ENCODE measurements at regions of chr16 and their contacts with region 1.

Region 1: GRCh38 chr16:23564575-23565363 is 7.2 kb downstream of the UBFD1 start:
- DNase-seq: peak; percentile 59 to 65
- ATAC-seq: peak; percentile 30 to 91 (median 87)
- H3K4me3 ChIP-seq: no peak overlapping the region
- H3K27ac ChIP-seq: peak overlapping the region in 9 of 10 donors; percentile 17 to 81 (median 55)
- H3K4me1 ChIP-seq: peaks cover 6 to 38% (median 18%) of the 10 kb centered on the region in 9 donors
- H3K27me3 ChIP-seq: no peaks in the 10 kb centered on the region
- CTCF ChIP-seq: no peak

Region 2: DNA sequence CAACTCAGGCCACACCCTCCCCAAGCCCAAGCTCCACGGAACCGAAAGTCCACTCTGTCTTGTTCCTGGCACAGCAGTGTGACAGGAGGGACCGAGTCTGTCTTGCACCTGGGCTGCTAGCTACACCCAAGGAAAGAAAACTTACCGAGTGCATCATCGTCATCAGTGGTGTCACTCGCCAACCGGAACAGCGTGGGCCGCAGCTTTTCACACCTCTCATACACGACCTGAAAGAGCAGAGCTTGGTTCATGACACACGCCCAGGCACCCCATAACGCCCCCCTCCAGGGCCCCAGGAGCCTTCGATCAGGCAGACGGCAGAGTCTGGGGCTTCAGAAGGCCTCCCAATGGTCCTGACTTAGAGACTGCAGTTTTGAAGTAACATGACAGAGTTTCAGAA is 82.0 kb before region 1 on chr16:
- intact Hi-C with region 1: no loop called
- DNase-seq: no peak
- ATAC-seq: peak in 2 of 8 donors; percentile 31 to 41
- H3K4me3 ChIP-seq: no peak overlapping the region
- H3K27ac ChIP-seq: peak overlapping the region in 1 of 10 donors; percentile 62
- H3K4me1 ChIP-seq: peaks cover 0 to 10% (median 0%) of the 10 kb centered on the region in 9 donors
- H3K27me3 ChIP-seq: no peaks in the 10 kb centered on the region
- CTCF ChIP-seq: no peak

Region 3: GRCh38 chr16:23595951-23596720 is 31.4 kb after region 1 on chr16 and contains the start of gene NDUFAB1:
- intact Hi-C with region 1: loop called in 2 of 10 experiments (anchors 2 to 5 kb)
- DNase-seq: peak; percentile 89 to 93
- ATAC-seq: peak; percentile 95 to 99 (median 98)
- H3K4me3 ChIP-seq: peak within 1 kb of the TSS; percentile 55 to 100 (median 96)
- H3K27ac ChIP-seq: peak within 1 kb of the TSS; percentile 78 to 96 (median 94)
- H3K4me1 ChIP-seq: peaks cover 7 to 46% (median 27%) of the 10 kb centered on the region in 9 donors
- H3K27me3 ChIP-seq: no peaks in the 10 kb centered on the region
- CTCF ChIP-seq: peak; percentile 99 to 100 (median 100)
- total RNA-seq, gene NDUFAB1: 338 to 592 (median 433) TPM

Region 4: DNA sequence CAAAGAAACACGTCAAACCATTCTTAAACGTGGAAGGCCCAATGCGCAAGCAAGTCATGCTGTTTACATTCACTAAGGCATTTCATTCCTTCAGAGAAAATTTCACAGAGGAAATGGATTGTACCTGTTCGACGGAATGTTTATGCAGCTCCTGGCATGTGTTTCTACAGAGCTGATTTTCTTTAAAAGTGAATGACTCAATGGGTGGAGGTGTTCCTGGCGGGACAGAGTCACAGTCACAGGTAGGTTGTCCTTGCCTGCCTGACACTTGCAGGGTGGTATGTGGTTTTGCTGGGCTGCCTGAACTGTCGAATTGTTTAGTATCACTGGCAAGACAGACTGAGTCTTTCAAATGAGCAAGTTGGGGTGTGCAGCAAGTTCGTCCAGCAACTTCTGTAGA is 64.7 kb after region 1 on chr16:
- intact Hi-C with region 1: no loop called
- DNase-seq: no peak
- ATAC-seq: no peak
- H3K4me3 ChIP-seq: no peak overlapping the region
- H3K27ac ChIP-seq: no peak overlapping the region
- H3K4me1 ChIP-seq: no peaks in the 10 kb centered on the region
- H3K27me3 ChIP-seq: no peaks in the 10 kb centered on the region
- CTCF ChIP-seq: no peak

Region 5: GRCh38 chr16:23754594-23755483 is 190.1 kb after region 1 on chr16 and contains the start of gene CHP2:
- intact Hi-C with region 1: no loop called
- DNase-seq: peak; percentile 11 to 44
- ATAC-seq: peak in 2 of 8 donors; percentile 38 to 48
- H3K4me3 ChIP-seq: peak within 1 kb of the TSS in 9 of 10 donors; percentile 5 to 40 (median 28)
- H3K27ac ChIP-seq: no peak within 1 kb of the TSS
- H3K4me1 ChIP-seq: peaks cover 0 to 13% (median 8%) of the 10 kb centered on the region in 9 donors
- H3K27me3 ChIP-seq: peaks cover 16 to 70% (median 51%) of the 10 kb centered on the region in 7 donors
- CTCF ChIP-seq: no peak
- total RNA-seq, gene CHP2: not detected

Measured in heart right ventricle (tissue), 16 donors.